CD8-positive, alpha-beta memory T cell (primary cell): ENCODE measurements at regions of chr7 and their contacts with region 1.

Region 1: DNA sequence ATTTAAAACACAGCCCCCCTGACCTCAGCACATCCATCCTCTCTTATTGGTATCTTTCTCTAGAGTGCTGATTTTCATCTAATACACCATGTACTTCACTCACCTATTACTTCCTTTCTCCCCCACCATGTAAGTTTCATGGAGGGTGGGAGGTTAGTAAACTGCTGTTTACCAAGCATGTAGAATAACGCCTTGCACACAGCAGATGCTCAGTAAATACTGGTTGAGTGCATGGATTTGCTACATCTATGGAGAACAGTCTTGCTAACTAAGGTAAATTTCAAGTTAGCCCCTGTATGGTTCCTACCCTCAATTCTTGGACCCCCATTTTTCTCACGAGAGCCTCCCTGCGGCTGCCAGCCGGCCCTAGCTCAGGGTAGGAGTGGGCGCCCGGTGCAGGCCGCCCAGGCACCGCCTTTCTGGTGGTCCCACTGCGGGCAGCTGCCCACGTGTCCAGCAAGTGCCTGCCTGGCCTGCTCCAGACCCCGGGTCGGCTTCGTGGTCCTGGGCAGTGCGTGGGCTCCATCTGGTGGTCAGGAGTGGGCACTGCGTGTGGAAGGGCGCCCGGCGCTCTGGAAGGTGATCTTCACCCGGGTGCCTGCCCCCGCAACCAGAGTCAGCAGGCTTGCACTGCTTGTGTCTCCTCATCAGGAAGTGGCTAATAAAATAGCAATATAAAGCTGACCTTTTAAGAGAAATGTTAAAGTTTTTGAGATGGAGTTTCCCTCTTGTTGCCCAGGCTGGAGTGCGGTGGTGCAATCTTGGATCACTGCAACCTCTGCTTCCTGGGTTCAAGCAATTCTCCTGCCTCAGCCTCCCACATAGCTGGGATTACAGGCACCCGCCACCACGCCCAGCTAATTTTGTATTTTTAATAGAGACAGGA is 63.4 kb upstream of the DNAJB6 start:
- DNase-seq: peak; percentile 43 to 65 (median 47)
- H3K4me3 ChIP-seq: no peak overlapping the region
- H3K4me3 Mint-ChIP-seq: peak overlapping the region in 1 of 7 donors; percentile 24
- H3K27ac ChIP-seq: no peak overlapping the region
- H3K27ac Mint-ChIP-seq: peak overlapping the region in 4 of 8 donors; percentile 30 to 68 (median 56)
- H3K4me1 ChIP-seq: peaks cover 12% of the 10 kb centered on the region
- H3K4me1 Mint-ChIP-seq: peaks cover 25 to 40% (median 37%) of the 10 kb centered on the region in 3 donors
- H3K27me3 ChIP-seq: no peaks in the 10 kb centered on the region
- H3K27me3 Mint-ChIP-seq: peaks cover 3 to 4% of the 10 kb centered on the region in 2 donors

Region 2: DNA sequence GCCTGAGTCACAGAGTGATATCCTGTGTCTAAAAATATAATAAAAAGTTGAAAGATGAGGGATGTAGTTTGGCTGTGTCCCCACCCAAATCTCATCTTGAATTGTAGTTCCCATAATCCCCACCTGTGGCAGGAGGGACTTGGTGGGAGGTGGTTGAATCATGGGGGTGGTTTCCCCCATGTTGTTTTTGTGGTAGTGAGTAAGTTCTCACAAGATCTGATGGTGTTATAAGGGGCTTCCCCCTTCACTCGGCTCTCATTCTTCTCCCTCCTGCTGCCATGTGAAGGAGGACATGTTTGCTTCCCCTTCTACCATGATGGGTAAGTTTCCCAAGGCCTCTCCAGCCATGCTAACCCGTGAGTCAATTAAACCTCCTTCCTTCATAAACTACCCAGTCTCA is 159.8 kb before region 1 on chr7:
- CTCF ChIA-PET with region 1: no interaction called
- POLR2A ChIA-PET with region 1: no interaction called
- DNase-seq: no peak
- H3K4me3 ChIP-seq: no peak overlapping the region
- H3K4me3 Mint-ChIP-seq: no peak overlapping the region
- H3K27ac ChIP-seq: no peak overlapping the region
- H3K27ac Mint-ChIP-seq: no peak overlapping the region
- H3K4me1 ChIP-seq: no peaks in the 10 kb centered on the region
- H3K4me1 Mint-ChIP-seq: no peaks in the 10 kb centered on the region
- H3K27me3 ChIP-seq: no peaks in the 10 kb centered on the region
- H3K27me3 Mint-ChIP-seq: peaks cover 13 to 45% of the 10 kb centered on the region in 2 donors

Region 3: GRCh38 chr7:157255201-157255606 is 18.2 kb before region 1 on chr7:
- CTCF ChIA-PET with region 1: interaction called, 13 read pairs
- POLR2A ChIA-PET with region 1: no interaction called
- DNase-seq: no peak
- H3K4me3 ChIP-seq: no peak overlapping the region
- H3K4me3 Mint-ChIP-seq: no peak overlapping the region
- H3K27ac ChIP-seq: no peak overlapping the region
- H3K27ac Mint-ChIP-seq: no peak overlapping the region
- H3K4me1 ChIP-seq: no peaks in the 10 kb centered on the region
- H3K4me1 Mint-ChIP-seq: peaks cover 0 to 6% (median 4%) of the 10 kb centered on the region in 3 donors
- H3K27me3 ChIP-seq: no peaks in the 10 kb centered on the region
- H3K27me3 Mint-ChIP-seq: no peaks in the 10 kb centered on the region

Region 4: DNA sequence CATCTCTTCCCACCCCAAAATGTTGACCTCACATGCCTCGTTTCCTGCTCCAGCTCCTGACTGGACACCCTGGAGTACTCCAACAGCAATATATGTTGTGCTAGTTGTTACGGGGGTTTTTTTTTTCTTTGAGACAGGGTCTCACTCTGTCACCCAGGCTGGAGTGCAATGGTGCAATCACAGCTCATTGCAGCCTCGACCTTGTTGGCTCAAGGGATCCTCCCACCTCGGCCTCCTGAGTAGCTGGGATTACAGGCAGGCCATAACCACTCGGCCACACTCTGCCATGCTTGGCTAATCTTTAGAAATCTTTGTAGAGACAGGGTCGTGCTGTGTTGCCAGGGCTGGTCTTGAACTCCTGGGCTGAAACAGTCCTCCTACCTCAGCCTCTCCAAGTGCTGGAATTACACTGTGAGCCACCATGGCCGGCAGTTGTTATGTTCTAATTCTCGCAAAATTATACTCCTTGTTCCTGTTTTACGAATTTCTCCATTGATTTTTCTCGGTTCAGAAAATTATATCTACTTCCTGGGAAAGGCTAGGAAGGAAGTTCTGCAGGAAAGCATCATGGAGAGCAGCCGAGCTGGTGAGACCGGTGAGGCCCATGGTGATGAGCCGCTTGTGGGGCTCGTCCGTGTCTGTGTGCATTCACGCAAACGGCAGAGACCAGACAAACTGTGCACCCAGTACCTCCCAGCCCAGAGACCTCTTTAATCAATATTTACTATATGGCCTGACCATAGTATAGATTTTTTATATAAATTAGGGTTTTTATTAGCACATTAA is 11.0 kb after region 1 on chr7:
- CTCF ChIA-PET with region 1: interaction called, 10 read pairs
- POLR2A ChIA-PET with region 1: interaction called, 7 read pairs
- DNase-seq: no peak
- H3K4me3 ChIP-seq: no peak overlapping the region
- H3K4me3 Mint-ChIP-seq: no peak overlapping the region
- H3K27ac ChIP-seq: no peak overlapping the region
- H3K27ac Mint-ChIP-seq: no peak overlapping the region
- H3K4me1 ChIP-seq: no peaks in the 10 kb centered on the region
- H3K4me1 Mint-ChIP-seq: no peaks in the 10 kb centered on the region
- H3K27me3 ChIP-seq: peaks cover 10% of the 10 kb centered on the region
- H3K27me3 Mint-ChIP-seq: peaks cover 2 to 11% of the 10 kb centered on the region in 2 donors

Region 5: GRCh38 chr7:157339777-157340677 is 66.6 kb after region 1 on chr7:
- CTCF ChIA-PET with region 1: interaction called, 18 read pairs
- POLR2A ChIA-PET with region 1: interaction called, 3 read pairs
- DNase-seq: peak; percentile 50 to 77 (median 60)
- H3K4me3 ChIP-seq: peak overlapping the region; percentile 2
- H3K4me3 Mint-ChIP-seq: peak overlapping the region; percentile 44 to 96 (median 65)
- H3K27ac ChIP-seq: no peak overlapping the region
- H3K27ac Mint-ChIP-seq: peak overlapping the region; percentile 1 to 97 (median 50)
- H3K4me1 ChIP-seq: peaks cover 51% of the 10 kb centered on the region
- H3K4me1 Mint-ChIP-seq: peaks cover 52 to 71% (median 70%) of the 10 kb centered on the region in 3 donors
- H3K27me3 ChIP-seq: no peaks in the 10 kb centered on the region
- H3K27me3 Mint-ChIP-seq: peaks cover 0 to 4% of the 10 kb centered on the region in 2 donors